ENCODE measurements at regions of chr11 and their contacts with region 1.

Region 1: DNA sequence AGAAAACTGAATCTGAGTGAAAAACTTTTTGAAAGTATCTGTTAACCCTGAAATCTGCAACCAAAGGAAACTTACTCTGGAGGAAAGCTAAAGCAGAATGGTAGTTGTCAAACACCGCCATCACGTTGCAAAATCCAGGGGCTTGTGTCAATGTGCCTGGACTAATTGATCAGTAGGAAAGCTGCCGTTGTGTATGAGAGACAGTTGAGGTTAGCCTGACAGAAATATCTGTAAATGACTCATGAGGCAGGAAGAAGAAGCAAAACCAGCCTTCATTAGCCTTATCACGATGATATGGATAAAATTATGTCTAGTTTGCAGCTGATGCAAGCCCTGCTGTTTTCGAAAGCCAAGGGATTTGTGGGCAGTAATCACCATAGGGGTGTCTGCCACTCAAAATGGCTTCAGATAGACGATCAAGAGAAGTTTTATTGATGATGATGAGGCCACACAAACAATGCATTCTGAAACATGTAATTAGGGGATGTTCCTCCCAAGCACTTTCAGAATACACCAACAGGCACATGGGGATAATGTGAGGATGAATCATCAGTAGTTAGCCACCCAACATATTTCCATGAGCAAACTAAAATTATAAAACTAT is 8.9 kb downstream of the SCGB1A1 start:
- DNase-seq: no peak
- ATAC-seq: no peak
- H3K4me3 ChIP-seq: no peak overlapping the region
- H3K27ac ChIP-seq: peak overlapping the region; percentile 37; the same call in 2 of the 3 replicates
- H3K4me1 ChIP-seq: peaks cover 16 to 30% of the 10 kb centered on the region in 2 experiments
- H3K27me3 ChIP-seq: no peaks in the 10 kb centered on the region
- CTCF ChIP-seq: no peak
- EP300 ChIP-seq: no peak; the same call in 1 of the 2 replicates
- POLR2A ChIP-seq: no peak
- RAD21 ChIP-seq: peak in 1 of 2 experiments; percentile 16; a peak in 1 of 4 replicates

Region 2: DNA sequence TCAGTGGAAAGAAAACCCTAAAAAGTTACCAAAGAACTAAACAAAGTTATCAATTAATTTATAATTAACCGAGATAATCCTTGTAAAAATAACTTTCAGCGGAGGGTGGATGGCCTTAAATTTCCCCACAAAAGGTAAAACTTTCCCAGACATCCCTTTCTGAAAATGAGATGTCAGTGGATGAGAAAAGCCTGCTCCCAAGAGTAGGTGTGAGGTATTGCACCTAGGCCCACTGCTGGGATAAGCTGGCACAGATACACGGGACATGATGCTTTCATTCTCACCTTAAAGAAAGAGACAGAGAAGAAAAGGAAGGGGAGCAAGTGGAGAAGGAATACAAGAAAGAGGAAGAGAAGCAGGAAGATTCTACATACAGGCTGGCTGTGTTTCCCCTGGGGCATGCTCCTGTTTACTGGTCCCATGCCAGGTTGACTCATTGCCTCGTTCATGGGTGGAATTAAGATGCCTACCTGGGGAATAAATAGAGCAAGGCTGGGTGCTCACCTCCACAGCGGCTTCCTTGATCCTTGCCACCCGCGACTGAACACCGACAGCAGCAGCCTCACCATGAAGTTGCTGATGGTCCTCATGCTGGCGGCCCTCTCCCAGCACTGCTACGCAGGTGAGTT is 158.0 kb before region 1 on chr11 and contains the start of gene SCGB2A2:
- CTCF ChIA-PET with region 1: no interaction called
- POLR2A ChIA-PET with region 1: no interaction called
- in situ Hi-C with region 1: no loop called
- intact Hi-C with region 1: no loop called
- DNase-seq: peak in 2 of 4 experiments; percentile 28 to 37
- ATAC-seq: peak; percentile 54; the same call in 1 of the 3 replicates
- H3K4me3 ChIP-seq: no peak within 1 kb of the TSS
- H3K27ac ChIP-seq: no peak within 1 kb of the TSS
- H3K4me1 ChIP-seq: 0 out of 5 replicates have a peak, but pooled peaks cover 0 to 5% of the 10 kb centered on the region in 2 experiments
- H3K27me3 ChIP-seq: peaks cover 25 to 38% of the 10 kb centered on the region in 2 experiments; a peak in 4 of 5 replicates
- CTCF ChIP-seq: peak in 2 of 3 experiments; percentile 28 to 37; a peak in 2 of 6 replicates
- EP300 ChIP-seq: no peak
- POLR2A ChIP-seq: no peak
- RAD21 ChIP-seq: peak in 1 of 2 experiments; percentile 17; a peak in 1 of 4 replicates
- polyA plus RNA-seq, gene SCGB2A2: not detected

Region 3: GRCh38 chr11:62353844-62354243 is 73.9 kb before region 1 on chr11:
- CTCF ChIA-PET with region 1: no interaction called
- POLR2A ChIA-PET with region 1: no interaction called
- in situ Hi-C with region 1: no loop called
- intact Hi-C with region 1: no loop called
- DNase-seq: no peak
- ATAC-seq: no peak
- H3K4me3 ChIP-seq: no peak overlapping the region
- H3K27ac ChIP-seq: no peak overlapping the region
- H3K4me1 ChIP-seq: peaks cover 2 to 6% of the 10 kb centered on the region in 2 experiments; a peak in 1 of 5 replicates
- H3K27me3 ChIP-seq: no peaks in the 10 kb centered on the region
- CTCF ChIP-seq: no peak
- EP300 ChIP-seq: no peak
- POLR2A ChIP-seq: no peak
- RAD21 ChIP-seq: no peak

Region 4: GRCh38 chr11:62508268-62509058 is 80.7 kb after region 1 on chr11:
- CTCF ChIA-PET with region 1: no interaction called
- POLR2A ChIA-PET with region 1: no interaction called
- in situ Hi-C with region 1: no loop called
- intact Hi-C with region 1: loop called (anchors 10 kb)
- DNase-seq: peak; percentile 50 to 72 (median 66)
- ATAC-seq: peak; percentile 66
- H3K4me3 ChIP-seq: no peak overlapping the region
- H3K27ac ChIP-seq: 0 out of 3 replicates have a peak overlapping the region, but pooled peaks have one; percentile 18
- H3K4me1 ChIP-seq: peaks cover 30 to 34% of the 10 kb centered on the region in 2 experiments
- H3K27me3 ChIP-seq: no peaks in the 10 kb centered on the region
- CTCF ChIP-seq: peak; percentile 15 to 61 (median 28); a peak in 4 of 6 replicates
- EP300 ChIP-seq: 0 out of 2 replicates have a peak, but pooled peaks have one; percentile 10
- POLR2A ChIP-seq: no peak
- RAD21 ChIP-seq: no peak; a peak in 1 of 4 replicates

Measured in K562 (cell line).